Esophagus muscularis mucosa (tissue), 4 donors: ENCODE measurements at regions of chr11 and their contacts with region 1.

Region 1: GRCh38 chr11:116454020-116454645 is 318.7 kb downstream of the BUD13 start:
- DNase-seq: no peak
- H3K4me3 ChIP-seq: no peak overlapping the region
- H3K27ac ChIP-seq: no peak overlapping the region
- H3K4me1 ChIP-seq: peaks cover 0 to 10% (median 5%) of the 10 kb centered on the region in 4 donors
- H3K27me3 ChIP-seq: no peaks in the 10 kb centered on the region
- CTCF ChIP-seq: peak; percentile 34 to 53 (median 42)
- EP300 ChIP-seq: no peak
- POLR2A ChIP-seq: no peak

Region 2: DNA sequence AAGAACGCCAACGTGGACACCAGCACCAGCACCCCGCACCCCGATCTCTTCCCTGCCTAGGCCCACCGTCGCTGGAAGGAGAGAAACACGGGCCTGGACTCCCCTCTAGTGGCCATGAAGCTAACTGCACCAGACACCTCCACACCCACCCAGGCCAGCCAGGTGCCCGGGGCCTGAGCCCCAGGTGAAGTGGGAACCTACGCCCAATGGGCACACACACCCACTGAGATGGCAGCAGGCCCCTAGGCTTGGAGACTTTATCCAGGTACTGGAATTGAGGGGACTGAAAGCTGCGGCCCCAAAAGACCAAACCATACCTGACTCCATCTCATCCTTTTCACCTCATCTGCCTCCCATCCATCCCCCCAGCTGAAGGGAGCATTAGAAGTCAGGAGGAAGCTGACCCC is 237.6 kb after region 1 on chr11:
- intact Hi-C with region 1: loop called (anchors 10 kb)
- DNase-seq: no peak
- H3K4me3 ChIP-seq: no peak overlapping the region
- H3K27ac ChIP-seq: no peak overlapping the region
- H3K4me1 ChIP-seq: no peaks in the 10 kb centered on the region
- H3K27me3 ChIP-seq: peaks cover 0 to 36% (median under 1%) of the 10 kb centered on the region in 4 donors
- CTCF ChIP-seq: peak; percentile 68 to 86 (median 70)
- EP300 ChIP-seq: no peak
- POLR2A ChIP-seq: no peak

Region 3: DNA sequence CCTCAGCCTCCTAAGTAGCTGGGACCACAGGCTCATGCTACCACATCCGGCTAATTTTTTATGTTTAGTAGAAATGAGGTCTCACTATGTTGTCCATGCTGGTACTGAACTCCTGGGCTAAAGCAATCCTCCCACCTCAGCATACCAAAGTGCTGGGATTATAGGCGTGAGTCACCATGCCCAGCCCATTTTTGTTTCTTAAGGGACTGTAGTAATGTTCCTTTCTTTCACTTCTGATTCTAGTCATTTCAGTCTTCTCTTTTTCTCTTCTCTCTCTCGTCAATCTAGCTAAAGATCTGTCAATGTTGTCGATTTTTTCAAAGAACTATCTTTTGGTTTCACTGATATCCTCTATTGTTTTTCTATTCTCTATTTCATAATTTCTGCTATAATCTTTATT is 494.3 kb after region 1 on chr11:
- intact Hi-C with region 1: no loop called
- DNase-seq: no peak
- H3K4me3 ChIP-seq: no peak overlapping the region
- H3K27ac ChIP-seq: no peak overlapping the region
- H3K4me1 ChIP-seq: peaks cover 0 to 11% (median 2%) of the 10 kb centered on the region in 4 donors
- H3K27me3 ChIP-seq: no peaks in the 10 kb centered on the region
- CTCF ChIP-seq: no peak
- EP300 ChIP-seq: no peak
- POLR2A ChIP-seq: no peak